OCI-LY7 (cell line): ENCODE measurements at regions of chr3 and their contacts with region 1.

Region 1: GRCh38 chr3:46549408-46549904 is 16.6 kb downstream of the LRRC2 start:
- DNase-seq: peak; percentile 97
- H3K4me3 ChIP-seq: peak overlapping the region; percentile 35
- H3K27ac ChIP-seq: peak overlapping the region; percentile 98
- H3K4me1 ChIP-seq: peaks cover 95% of the 10 kb centered on the region
- CTCF ChIP-seq: no peak

Region 2: DNA sequence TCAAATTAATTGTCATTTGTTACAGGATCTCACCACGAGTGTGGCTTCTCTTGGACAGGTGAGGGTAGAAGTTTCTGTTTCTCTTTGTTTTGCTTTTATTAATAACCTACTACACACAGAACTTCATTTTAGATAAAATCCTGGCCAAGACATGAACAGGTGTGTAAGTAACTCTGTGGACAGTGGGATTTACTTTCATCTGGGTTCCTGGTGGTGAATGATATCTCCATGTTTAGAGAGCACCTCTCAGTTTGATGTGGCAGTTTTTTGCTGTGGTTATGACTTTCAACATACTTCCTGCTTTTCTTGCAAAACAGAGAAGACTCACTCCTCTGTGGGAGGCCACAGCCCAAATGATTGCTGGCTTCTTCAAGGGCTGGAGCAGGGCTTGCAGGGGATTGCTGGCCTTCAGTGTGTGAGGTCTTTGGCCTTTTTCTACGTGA is 451.1 kb before region 1 on chr3:
- CTCF ChIA-PET with region 1: no interaction called
- POLR2A ChIA-PET with region 1: interaction called, 3 read pairs
- intact Hi-C with region 1: loop called (anchors 5 kb)
- DNase-seq: peak; percentile 68
- H3K4me3 ChIP-seq: peak overlapping the region; percentile 10
- H3K27ac ChIP-seq: peak overlapping the region; percentile 64
- H3K4me1 ChIP-seq: peaks cover 60% of the 10 kb centered on the region
- CTCF ChIP-seq: no peak

Region 3: DNA sequence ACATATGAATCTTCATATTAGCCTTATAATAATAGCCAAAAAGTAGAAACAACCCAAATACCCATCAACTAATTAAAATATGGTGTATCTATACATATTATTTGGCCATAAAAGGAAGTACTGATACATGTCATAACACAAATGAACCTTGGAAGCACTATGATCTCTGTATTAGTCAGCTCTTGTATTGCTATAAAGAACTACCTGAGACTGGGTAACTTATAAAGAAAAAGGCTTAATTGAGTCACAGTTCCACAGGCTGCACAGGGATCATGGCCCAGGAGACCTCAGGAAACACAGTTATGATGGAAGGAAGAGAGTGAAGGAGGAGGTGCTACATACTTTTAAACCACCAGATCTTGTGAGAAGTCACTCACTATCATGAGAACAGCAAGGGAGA is 211.5 kb before region 1 on chr3:
- CTCF ChIA-PET with region 1: no interaction called
- POLR2A ChIA-PET with region 1: no interaction called
- intact Hi-C with region 1: no loop called
- DNase-seq: no peak
- H3K4me3 ChIP-seq: no peak overlapping the region
- H3K27ac ChIP-seq: no peak overlapping the region
- H3K4me1 ChIP-seq: no peaks in the 10 kb centered on the region
- CTCF ChIP-seq: no peak

Region 4: GRCh38 chr3:46496741-46497554 is 52.5 kb before region 1 on chr3:
- CTCF ChIA-PET with region 1: interaction called, 4 read pairs
- POLR2A ChIA-PET with region 1: interaction called, 16 read pairs
- intact Hi-C with region 1: no loop called
- DNase-seq: peak; percentile 72
- H3K4me3 ChIP-seq: no peak overlapping the region
- H3K27ac ChIP-seq: no peak overlapping the region
- H3K4me1 ChIP-seq: peaks cover 77% of the 10 kb centered on the region
- CTCF ChIP-seq: peak; percentile 85

Region 5: GRCh38 chr3:46538803-46539442 is 10.5 kb before region 1 on chr3:
- CTCF ChIA-PET with region 1: interaction called, 25 read pairs
- POLR2A ChIA-PET with region 1: interaction called, 149 read pairs
- intact Hi-C with region 1: loop called (anchors 1 kb)
- DNase-seq: peak; percentile 99
- H3K4me3 ChIP-seq: peak overlapping the region; percentile 56
- H3K27ac ChIP-seq: peak overlapping the region; percentile 99
- H3K4me1 ChIP-seq: peaks cover 79% of the 10 kb centered on the region
- CTCF ChIP-seq: no peak

Region 6: GRCh38 chr3:46970391-46971091 is 421.1 kb after region 1 on chr3:
- CTCF ChIA-PET with region 1: no interaction called
- POLR2A ChIA-PET with region 1: no interaction called
- intact Hi-C with region 1: loop called (anchors 5 kb)
- DNase-seq: no peak
- H3K4me3 ChIP-seq: peak overlapping the region; percentile 56
- H3K27ac ChIP-seq: peak overlapping the region; percentile 87
- H3K4me1 ChIP-seq: peaks cover 89% of the 10 kb centered on the region
- CTCF ChIP-seq: no peak